Transverse colon (tissue), 4 donors: ENCODE measurements at regions of chr14 and their contacts with region 1.

Region 1: DNA sequence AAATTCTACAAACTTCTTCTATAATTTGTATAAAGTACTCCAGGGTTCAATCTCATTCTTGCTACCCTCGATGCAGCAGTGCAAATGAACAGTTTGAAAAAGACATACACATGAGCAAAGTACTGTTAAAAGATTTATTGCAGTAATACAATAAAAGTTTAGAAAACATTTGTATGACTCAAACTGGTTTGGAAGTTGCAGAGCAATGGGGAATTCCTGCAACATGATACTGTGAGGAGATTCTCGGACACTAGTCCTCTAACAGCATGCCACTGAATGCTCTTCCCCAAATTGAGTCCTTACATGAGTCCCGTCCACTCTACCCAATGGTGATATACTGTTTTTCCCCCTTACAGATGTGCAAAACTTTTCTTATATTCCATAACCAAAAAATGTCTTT is 45.4 kb downstream of the ATG14 start:
- DNase-seq: no peak
- H3K4me3 ChIP-seq: no peak overlapping the region
- H3K27ac ChIP-seq: peak overlapping the region in 2 of 4 donors; percentile 12 to 53
- H3K4me1 ChIP-seq: peaks cover 0 to 20% (median 11%) of the 10 kb centered on the region in 4 donors
- H3K27me3 ChIP-seq: no peaks in the 10 kb centered on the region
- CTCF ChIP-seq: no peak
- EP300 ChIP-seq: no peak
- POLR2A ChIP-seq: no peak

Region 2: DNA sequence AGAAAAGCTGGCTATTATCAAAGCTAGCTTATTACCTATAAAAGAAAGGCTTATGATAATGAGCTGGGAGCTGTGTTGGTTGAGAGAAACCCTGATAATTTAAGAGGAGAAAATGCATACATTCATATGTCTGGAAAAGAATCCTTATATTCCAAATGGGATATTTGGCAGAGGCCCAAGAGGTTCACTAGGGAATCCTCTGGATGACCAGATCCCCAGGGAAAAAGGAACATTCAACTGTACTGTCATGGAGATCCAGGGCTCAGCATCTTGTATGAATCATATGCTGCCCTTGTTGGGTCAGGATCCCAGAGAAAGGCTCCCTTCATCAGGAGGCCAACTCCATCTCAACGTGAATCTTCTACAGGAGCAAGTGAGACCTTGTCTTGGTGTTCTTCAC is 111.7 kb before region 1 on chr14:
- in situ Hi-C with region 1: loop called in 2 of 4 experiments (anchors 10 to 25 kb)
- intact Hi-C with region 1: no loop called
- DNase-seq: no peak
- H3K4me3 ChIP-seq: no peak overlapping the region
- H3K27ac ChIP-seq: no peak overlapping the region
- H3K4me1 ChIP-seq: no peaks in the 10 kb centered on the region
- H3K27me3 ChIP-seq: peaks cover 4% of the 10 kb centered on the region
- CTCF ChIP-seq: no peak
- EP300 ChIP-seq: no peak
- POLR2A ChIP-seq: no peak